Activated CD4-positive, alpha-beta memory T cell treated with anti-CD3 and anti-CD28 coated beads, Interleukin-2, amount 10 ng/mL, durations not matched to agents 7 days and 5 days (primary cell): ENCODE measurements at regions of chr9 and their contacts with region 1.

Region 1: GRCh38 chr9:89602978-89603766 is 1.6 kb upstream of the GADD45G start:
- DNase-seq: peak; percentile 92
- H3K4me3 Mint-ChIP-seq: peak overlapping the region; percentile 71
- H3K27ac Mint-ChIP-seq: peak overlapping the region; percentile 63
- H3K4me1 Mint-ChIP-seq: peaks cover 31% of the 10 kb centered on the region
- H3K27me3 Mint-ChIP-seq: peaks cover 24% of the 10 kb centered on the region

Region 2: GRCh38 chr9:89260525-89260924 is 342.6 kb before region 1 on chr9:
- CTCF ChIA-PET with region 1: no interaction called
- POLR2A ChIA-PET with region 1: no interaction called
- DNase-seq: no peak
- H3K4me3 Mint-ChIP-seq: no peak overlapping the region
- H3K27ac Mint-ChIP-seq: no peak overlapping the region
- H3K4me1 Mint-ChIP-seq: no peaks in the 10 kb centered on the region
- H3K27me3 Mint-ChIP-seq: peaks cover 15% of the 10 kb centered on the region

Region 3: GRCh38 chr9:89657765-89658164 is 54.6 kb after region 1 on chr9:
- CTCF ChIA-PET with region 1: interaction called, 3 read pairs
- POLR2A ChIA-PET with region 1: interaction called, 20 read pairs
- DNase-seq: peak; percentile 70
- H3K4me3 Mint-ChIP-seq: no peak overlapping the region
- H3K27ac Mint-ChIP-seq: peak overlapping the region; percentile 11
- H3K4me1 Mint-ChIP-seq: peaks cover 37% of the 10 kb centered on the region
- H3K27me3 Mint-ChIP-seq: peaks cover 26% of the 10 kb centered on the region

Region 4: GRCh38 chr9:89710697-89711096 is 107.5 kb after region 1 on chr9:
- CTCF ChIA-PET with region 1: interaction called, 4 read pairs
- POLR2A ChIA-PET with region 1: interaction called, 15 read pairs
- DNase-seq: no peak
- H3K4me3 Mint-ChIP-seq: no peak overlapping the region
- H3K27ac Mint-ChIP-seq: peak overlapping the region; percentile 80
- H3K4me1 Mint-ChIP-seq: peaks cover 92% of the 10 kb centered on the region
- H3K27me3 Mint-ChIP-seq: no peaks in the 10 kb centered on the region

Region 5: DNA sequence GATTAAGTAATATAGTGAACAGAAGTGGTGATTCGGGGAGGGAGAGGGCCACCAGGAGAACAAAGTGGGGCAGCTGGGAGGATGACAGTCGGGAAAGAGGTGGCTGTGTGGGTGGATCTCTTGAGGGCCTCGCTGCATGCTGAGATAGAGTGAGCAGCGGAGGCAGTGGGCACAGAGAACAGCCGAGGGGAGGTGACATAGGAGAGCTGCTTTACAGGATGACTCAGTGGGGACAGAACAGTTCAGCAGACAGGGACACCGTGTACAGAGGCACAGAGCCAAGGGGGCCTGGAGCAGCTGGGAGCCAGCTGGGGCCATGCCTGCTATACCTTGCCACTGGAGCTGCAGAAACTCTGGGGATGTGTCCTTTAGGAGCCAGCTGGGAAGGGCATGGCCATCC is 275.5 kb after region 1 on chr9:
- CTCF ChIA-PET with region 1: interaction called, 11 read pairs
- POLR2A ChIA-PET with region 1: interaction called, 3 read pairs
- DNase-seq: no peak
- H3K4me3 Mint-ChIP-seq: no peak overlapping the region
- H3K27ac Mint-ChIP-seq: no peak overlapping the region
- H3K4me1 Mint-ChIP-seq: no peaks in the 10 kb centered on the region
- H3K27me3 Mint-ChIP-seq: no peaks in the 10 kb centered on the region

Region 6: GRCh38 chr9:89999534-90000370 is 396.6 kb after region 1 on chr9:
- CTCF ChIA-PET with region 1: interaction called, 10 read pairs
- POLR2A ChIA-PET with region 1: interaction called, 6 read pairs
- DNase-seq: peak; percentile 65
- H3K4me3 Mint-ChIP-seq: peak overlapping the region; percentile 12
- H3K27ac Mint-ChIP-seq: peak overlapping the region; percentile 47
- H3K4me1 Mint-ChIP-seq: peaks cover 28% of the 10 kb centered on the region
- H3K27me3 Mint-ChIP-seq: peaks cover 8% of the 10 kb centered on the region

Region 7: GRCh38 chr9:90095682-90096081 is 492.5 kb after region 1 on chr9:
- CTCF ChIA-PET with region 1: interaction called, 235 read pairs
- POLR2A ChIA-PET with region 1: interaction called, 4 read pairs
- DNase-seq: no peak
- H3K4me3 Mint-ChIP-seq: no peak overlapping the region
- H3K27ac Mint-ChIP-seq: no peak overlapping the region
- H3K4me1 Mint-ChIP-seq: peaks cover 17% of the 10 kb centered on the region
- H3K27me3 Mint-ChIP-seq: peaks cover 20% of the 10 kb centered on the region